ENCODE measurements at regions of chr11 and their contacts with region 1.

Region 1: DNA sequence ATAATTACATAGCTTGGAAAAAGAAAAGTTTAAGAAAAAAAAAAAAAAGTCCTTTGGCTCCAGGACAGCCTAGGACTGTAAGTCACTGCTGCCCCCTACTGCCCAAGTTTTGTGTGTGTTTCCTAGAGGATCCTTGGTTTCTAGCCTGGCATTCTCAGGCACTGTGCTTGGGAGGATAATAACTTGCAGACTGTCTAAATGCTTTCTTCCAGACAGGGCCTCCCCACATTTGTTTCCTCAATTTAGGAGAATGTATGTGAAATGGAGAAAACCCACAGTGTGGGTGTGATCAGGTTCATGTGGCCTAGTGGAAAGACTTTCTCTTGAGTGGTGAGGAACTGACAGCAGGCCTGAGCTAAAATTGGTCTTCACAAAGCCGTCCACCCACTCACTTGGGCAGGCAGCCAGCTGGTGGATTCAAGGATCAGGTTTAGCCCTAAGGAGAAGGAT is 191.0 kb downstream of the NAV2 start:
- DNase-seq: peak in 4 of 9 donors; percentile 1 to 23 (median 4)
- ATAC-seq: no peak
- H3K4me3 ChIP-seq: no peak overlapping the region
- H3K4me3 Mint-ChIP-seq: no peak overlapping the region
- H3K27ac ChIP-seq: no peak overlapping the region
- H3K27ac Mint-ChIP-seq: no peak overlapping the region
- H3K4me1 ChIP-seq: no peaks in the 10 kb centered on the region
- H3K4me1 Mint-ChIP-seq: no peaks in the 10 kb centered on the region
- H3K27me3 ChIP-seq: no peaks in the 10 kb centered on the region
- H3K27me3 Mint-ChIP-seq: peaks cover 0 to 9% (median 0%) of the 10 kb centered on the region in 5 donors

Region 2: GRCh38 chr11:19259487-19260345 is 643.9 kb before region 1 on chr11:
- CTCF ChIA-PET with region 1: no interaction called
- POLR2A ChIA-PET with region 1: no interaction called
- intact Hi-C with region 1: loop called in 1 of 2 experiments (anchors 5 kb)
- DNase-seq: peak in 7 of 9 donors; percentile 32 to 57 (median 38)
- ATAC-seq: peak; percentile 88
- H3K4me3 ChIP-seq: no peak overlapping the region
- H3K4me3 Mint-ChIP-seq: no peak overlapping the region
- H3K27ac ChIP-seq: no peak overlapping the region
- H3K27ac Mint-ChIP-seq: no peak overlapping the region
- H3K4me1 ChIP-seq: no peaks in the 10 kb centered on the region
- H3K4me1 Mint-ChIP-seq: peaks cover 0 to 3% (median 0%) of the 10 kb centered on the region in 7 donors
- H3K27me3 ChIP-seq: no peaks in the 10 kb centered on the region
- H3K27me3 Mint-ChIP-seq: peaks cover 0 to 17% (median 14%) of the 10 kb centered on the region in 5 donors

Region 3: GRCh38 chr11:19712281-19713220 is 191.1 kb before region 1 on chr11 and contains the start of gene NAV2:
- CTCF ChIA-PET with region 1: no interaction called
- POLR2A ChIA-PET with region 1: no interaction called
- intact Hi-C with region 1: no loop called
- DNase-seq: peak; percentile 43 to 80 (median 62)
- ATAC-seq: peak; percentile 98
- H3K4me3 ChIP-seq: peak within 1 kb of the TSS; percentile 81
- H3K4me3 Mint-ChIP-seq: peak within 1 kb of the TSS; percentile 91 to 98 (median 94)
- H3K27ac ChIP-seq: peak within 1 kb of the TSS; percentile 24
- H3K27ac Mint-ChIP-seq: peak within 1 kb of the TSS; percentile 63 to 87 (median 77)
- H3K4me1 ChIP-seq: peaks cover 14 to 18% of the 10 kb centered on the region in 2 donors
- H3K4me1 Mint-ChIP-seq: peaks cover 6 to 27% (median 24%) of the 10 kb centered on the region in 7 donors
- H3K27me3 ChIP-seq: peaks cover 14% of the 10 kb centered on the region in 2 donors
- H3K27me3 Mint-ChIP-seq: peaks cover 23 to 69% (median 33%) of the 10 kb centered on the region in 5 donors
- total RNA-seq, gene NAV2: 0.24 to 2.2 (median 0.48) TPM

Region 4: GRCh38 chr11:19846654-19847305 is 56.9 kb before region 1 on chr11:
- CTCF ChIA-PET with region 1: no interaction called
- POLR2A ChIA-PET with region 1: no interaction called
- intact Hi-C with region 1: no loop called
- DNase-seq: no peak
- ATAC-seq: no peak
- H3K4me3 ChIP-seq: no peak overlapping the region
- H3K4me3 Mint-ChIP-seq: no peak overlapping the region
- H3K27ac ChIP-seq: no peak overlapping the region
- H3K27ac Mint-ChIP-seq: no peak overlapping the region
- H3K4me1 ChIP-seq: no peaks in the 10 kb centered on the region
- H3K4me1 Mint-ChIP-seq: no peaks in the 10 kb centered on the region
- H3K27me3 ChIP-seq: no peaks in the 10 kb centered on the region
- H3K27me3 Mint-ChIP-seq: peaks cover 6 to 16% (median 7%) of the 10 kb centered on the region in 5 donors

Region 5: DNA sequence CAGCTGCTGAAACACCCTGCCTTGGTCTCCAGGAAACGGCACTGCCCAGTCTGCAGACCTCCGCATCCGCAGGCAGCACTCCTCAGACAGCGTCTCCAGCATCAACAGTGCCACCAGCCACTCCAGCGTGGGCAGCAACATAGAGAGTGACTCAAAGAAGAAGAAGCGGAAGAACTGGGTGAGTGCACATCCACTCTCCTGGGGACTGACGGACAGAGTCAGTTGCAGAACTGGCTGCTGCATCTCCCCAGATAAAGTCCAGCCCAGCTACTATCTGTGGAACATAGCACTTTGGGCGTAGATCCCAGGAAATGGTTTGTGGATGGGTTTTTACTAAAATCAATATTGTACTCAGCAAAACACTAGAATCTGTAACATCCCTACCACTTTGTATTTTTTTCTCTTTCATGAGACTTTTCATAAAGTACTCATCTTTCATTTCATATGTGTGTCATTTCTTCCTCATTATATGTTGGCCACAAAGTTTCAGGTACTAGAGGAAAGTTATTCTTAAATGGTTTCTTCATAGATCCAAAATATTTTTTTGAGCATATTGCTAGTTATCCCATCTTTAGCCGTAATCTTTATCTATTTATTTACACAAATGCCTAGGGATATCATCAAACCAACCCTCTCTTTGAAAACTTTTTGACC is 176.5 kb after region 1 on chr11:
- CTCF ChIA-PET with region 1: no interaction called
- POLR2A ChIA-PET with region 1: no interaction called
- intact Hi-C with region 1: no loop called
- DNase-seq: no peak
- ATAC-seq: no peak
- H3K4me3 ChIP-seq: no peak overlapping the region
- H3K4me3 Mint-ChIP-seq: no peak overlapping the region
- H3K27ac ChIP-seq: no peak overlapping the region
- H3K27ac Mint-ChIP-seq: no peak overlapping the region
- H3K4me1 ChIP-seq: no peaks in the 10 kb centered on the region
- H3K4me1 Mint-ChIP-seq: peaks cover 0 to 8% (median 0%) of the 10 kb centered on the region in 7 donors
- H3K27me3 ChIP-seq: no peaks in the 10 kb centered on the region
- H3K27me3 Mint-ChIP-seq: peaks cover 9 to 32% (median 18%) of the 10 kb centered on the region in 5 donors